ENCODE measurements at regions of chr3 and their contacts with region 1.

Region 1: DNA sequence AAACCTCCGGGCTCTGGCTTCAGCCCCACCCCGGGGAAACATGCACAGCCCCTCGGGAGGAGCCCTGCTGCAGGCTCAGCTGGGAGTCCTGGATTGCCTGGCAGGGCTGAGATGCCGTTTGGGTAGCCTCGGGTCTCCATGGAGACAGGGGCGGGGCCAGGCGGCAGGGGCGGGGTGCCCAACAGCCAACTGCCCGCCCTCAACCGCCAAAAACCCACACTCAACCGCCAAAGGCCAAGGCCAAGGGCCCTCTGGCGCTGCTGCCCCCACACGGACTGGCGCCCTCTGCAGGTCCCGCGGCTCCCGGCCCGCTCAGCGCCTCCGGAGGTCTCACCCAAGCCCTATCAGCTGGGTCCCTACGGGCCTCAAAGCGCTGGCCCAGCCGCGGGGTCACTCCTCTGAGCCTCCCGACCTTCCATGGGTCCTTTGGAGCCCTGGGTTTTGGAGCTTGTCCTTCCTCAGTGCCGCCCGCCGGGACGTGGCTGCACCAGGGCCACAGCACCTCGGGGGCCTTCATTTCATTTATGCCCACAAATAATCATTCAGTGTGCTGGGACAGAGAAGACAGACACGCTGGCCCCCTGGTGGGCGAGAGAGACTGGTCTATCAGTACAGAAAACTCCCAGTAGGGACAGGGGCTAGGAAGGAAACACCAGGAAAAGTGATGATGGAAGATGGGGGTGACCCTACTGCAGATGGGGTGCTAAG is 33.5 kb upstream of the ACAD9 start:
- DNase-seq: peak; percentile 88
- H3K4me3 Mint-ChIP-seq: peak overlapping the region; percentile 62
- H3K27ac Mint-ChIP-seq: peak overlapping the region; percentile 38
- H3K4me1 Mint-ChIP-seq: peaks cover 14% of the 10 kb centered on the region
- H3K27me3 Mint-ChIP-seq: peaks cover 8% of the 10 kb centered on the region

Region 2: GRCh38 chr3:128794770-128795649 is 50.9 kb before region 1 on chr3:
- CTCF ChIA-PET with region 1: interaction called, 12 read pairs
- DNase-seq: peak; percentile 77
- H3K4me3 Mint-ChIP-seq: peak overlapping the region; percentile 3
- H3K27ac Mint-ChIP-seq: peak overlapping the region; percentile 82
- H3K4me1 Mint-ChIP-seq: peaks cover 78% of the 10 kb centered on the region
- H3K27me3 Mint-ChIP-seq: no peaks in the 10 kb centered on the region